ENCODE measurements at regions of chr6 and their contacts with region 1.

Region 1: GRCh38 chr6:7414811-7415210 is 25.2 kb downstream of the RIOK1 start:
- DNase-seq: no peak
- H3K4me3 ChIP-seq: no peak overlapping the region
- H3K27ac ChIP-seq: no peak overlapping the region
- H3K4me1 ChIP-seq: peaks cover 13 to 24% (median 17%) of the 10 kb centered on the region in 4 donors
- H3K27me3 ChIP-seq: no peaks in the 10 kb centered on the region
- CTCF ChIP-seq: no peak
- EP300 ChIP-seq: no peak
- POLR2A ChIP-seq: no peak

Region 2: DNA sequence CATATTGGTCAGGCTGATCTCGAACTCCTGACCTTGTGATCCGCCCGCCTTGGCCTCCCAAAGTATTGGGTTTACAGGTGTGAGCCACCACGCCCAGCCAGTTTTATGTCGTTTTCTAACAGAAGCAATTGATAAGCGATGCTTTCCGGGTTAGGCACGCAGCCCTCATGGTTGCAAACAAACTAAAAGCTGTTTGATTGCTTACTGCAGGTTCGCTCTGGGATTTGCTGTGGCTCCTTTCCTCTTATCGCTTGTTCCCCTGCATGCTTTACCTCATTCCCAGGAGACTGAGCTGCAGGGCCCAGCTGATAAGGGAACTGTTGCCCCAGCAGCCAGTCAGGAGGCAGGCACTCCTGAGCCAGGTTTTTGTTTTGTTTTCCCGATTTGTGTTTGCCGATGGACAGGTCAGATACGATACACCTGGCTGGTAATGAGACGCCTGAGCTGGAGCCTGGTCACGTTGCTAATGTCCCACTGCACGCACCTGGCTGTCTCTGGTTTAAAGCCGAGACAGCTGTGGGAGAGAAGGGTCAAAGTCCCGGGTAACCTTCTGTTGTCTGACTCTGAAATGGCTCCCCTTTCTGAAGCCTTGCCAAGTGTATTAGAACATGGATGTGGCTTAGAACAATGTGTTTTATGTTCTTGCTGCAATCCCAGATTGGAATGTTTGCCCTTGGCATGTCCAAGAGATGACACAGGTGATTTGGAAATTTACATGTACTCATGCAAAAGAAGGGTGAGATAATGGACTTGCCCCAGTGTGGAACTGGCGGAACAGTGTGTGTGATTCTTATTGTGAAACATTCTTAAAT is 146.5 kb after region 1 on chr6:
- intact Hi-C with region 1: loop called (anchors 10 kb)
- DNase-seq: peak; percentile 90 to 93
- H3K4me3 ChIP-seq: no peak overlapping the region
- H3K27ac ChIP-seq: peak overlapping the region; percentile 55 to 77 (median 65)
- H3K4me1 ChIP-seq: peaks cover 0 to 13% (median 8%) of the 10 kb centered on the region in 4 donors
- H3K27me3 ChIP-seq: peaks cover 0 to 5% (median 0%) of the 10 kb centered on the region in 3 donors
- CTCF ChIP-seq: no peak
- EP300 ChIP-seq: no peak
- POLR2A ChIP-seq: no peak

Measured in stomach (tissue), 19 donors.